ENCODE measurements at regions of chr15 and their contacts with region 1.

Region 1: DNA sequence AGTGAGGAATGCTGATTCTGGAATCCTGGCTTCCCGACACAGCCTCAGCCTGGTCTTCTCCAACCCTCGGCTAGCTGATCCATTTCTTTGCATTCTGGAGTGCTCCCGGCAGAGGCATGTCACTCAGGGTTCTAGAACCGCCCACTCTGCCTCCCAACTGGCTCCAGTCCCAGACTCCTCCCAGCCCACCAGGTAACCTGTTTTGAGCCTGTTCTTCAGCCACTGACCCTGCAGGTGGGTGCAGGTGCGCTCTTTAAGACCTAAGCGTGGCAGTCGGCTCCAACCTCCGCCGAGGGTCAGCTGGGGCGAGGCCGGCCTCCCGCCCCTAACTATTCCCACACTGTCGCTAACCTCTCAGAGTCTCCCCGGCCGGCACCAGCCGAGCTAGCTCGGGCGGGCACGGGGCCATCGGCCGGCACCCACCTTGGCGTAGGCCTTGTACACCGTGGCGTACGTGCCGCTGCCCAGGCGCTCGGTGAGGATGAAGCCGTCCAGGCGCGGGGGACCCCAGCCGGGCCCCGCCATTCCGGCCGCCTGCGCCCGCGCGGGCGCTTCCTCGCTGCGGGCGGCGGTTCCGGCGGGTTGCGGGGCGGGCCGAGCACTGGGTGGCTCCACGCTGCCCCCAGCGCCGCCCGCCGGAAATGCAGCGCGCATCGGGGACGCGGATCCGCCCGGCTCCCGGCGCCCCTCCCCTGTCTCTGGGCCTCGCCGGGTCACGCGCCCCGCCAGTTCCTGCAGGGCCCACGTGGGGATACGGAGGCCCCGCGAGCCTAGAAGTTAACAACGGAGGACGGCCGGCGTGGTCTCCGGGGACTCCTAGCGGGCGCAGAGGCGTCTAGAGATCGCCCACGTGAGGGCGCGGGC is at the start of gene ULK3:
- DNase-seq: no peak
- ATAC-seq: peak; percentile 95
- H3K4me3 ChIP-seq: peak within 1 kb of the TSS; percentile 86
- H3K27ac ChIP-seq: peak within 1 kb of the TSS; percentile 80
- H3K4me1 ChIP-seq: peaks cover 13% of the 10 kb centered on the region
- H3K27me3 ChIP-seq: no peaks in the 10 kb centered on the region
- CTCF ChIP-seq: peak; percentile 45 to 60 (median 50); a peak in 5 of 6 replicates
- EP300 ChIP-seq: no peak
- POLR2A ChIP-seq: peak; percentile 75
- RAD21 ChIP-seq: peak; percentile 26
- polyA plus RNA-seq, gene ULK3: 0.64 to 1.4 TPM

Region 2: GRCh38 chr15:74793135-74794028 is 49.4 kb before region 1 on chr15:
- CTCF ChIA-PET with region 1: interaction called, 10 read pairs
- POLR2A ChIA-PET with region 1: no interaction called
- RAD21 ChIA-PET with region 1: interaction called, 4 read pairs
- SMC1A ChIA-PET with region 1: no interaction called
- in situ Hi-C with region 1: no loop called
- intact Hi-C with region 1: no loop called
- DNase-seq: no peak
- ATAC-seq: peak; percentile 23
- H3K4me3 ChIP-seq: peak overlapping the region; percentile 77
- H3K27ac ChIP-seq: peak overlapping the region; percentile 96
- H3K4me1 ChIP-seq: peaks cover 64% of the 10 kb centered on the region
- H3K27me3 ChIP-seq: no peaks in the 10 kb centered on the region
- CTCF ChIP-seq: peak; percentile 63 to 68 (median 64)
- EP300 ChIP-seq: no peak
- POLR2A ChIP-seq: peak; percentile 33
- RAD21 ChIP-seq: peak; percentile 64

Region 3: DNA sequence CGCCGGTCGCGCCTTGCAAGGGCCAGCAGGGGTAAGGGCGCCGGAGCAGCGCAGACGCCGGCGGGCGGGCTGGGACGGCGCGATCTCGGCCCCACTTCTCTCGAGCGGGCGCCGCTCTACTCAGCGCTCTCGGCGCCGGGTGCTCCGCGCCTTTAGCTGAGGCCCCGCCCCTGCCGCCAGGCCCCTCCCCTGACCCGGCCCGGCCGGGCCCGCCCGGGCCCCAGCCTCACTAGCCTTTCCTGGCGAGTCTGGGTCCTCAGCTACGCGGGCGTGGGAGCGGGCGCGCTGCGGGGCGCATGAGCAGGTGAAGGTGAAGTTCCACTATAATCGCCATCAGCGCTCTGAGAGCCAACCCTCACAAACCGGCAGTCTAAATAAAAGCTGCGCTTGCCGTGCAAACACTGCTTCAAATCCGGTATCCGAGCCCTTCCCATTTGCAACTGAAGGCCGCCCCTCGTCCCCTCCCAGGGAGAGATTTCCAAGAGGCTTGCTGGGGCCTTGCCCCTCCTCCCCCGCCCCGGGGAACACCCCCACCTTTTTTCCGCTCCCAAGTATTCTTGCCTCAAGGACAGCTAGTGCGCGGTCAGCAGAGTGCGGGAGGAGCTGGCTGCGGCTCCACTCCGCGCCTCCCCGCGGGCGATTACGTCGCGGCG is 114.0 kb after region 1 on chr15 and contains the start of gene RPP25:
- CTCF ChIA-PET with region 1: no interaction called
- POLR2A ChIA-PET with region 1: no interaction called
- RAD21 ChIA-PET with region 1: no interaction called
- SMC1A ChIA-PET with region 1: no interaction called
- in situ Hi-C with region 1: no loop called
- intact Hi-C with region 1: no loop called
- DNase-seq: no peak
- ATAC-seq: peak; percentile 94
- H3K4me3 ChIP-seq: peak within 1 kb of the TSS; percentile 65
- H3K27ac ChIP-seq: no peak within 1 kb of the TSS
- H3K4me1 ChIP-seq: peaks cover 30% of the 10 kb centered on the region
- H3K27me3 ChIP-seq: peaks cover 8 to 17% of the 10 kb centered on the region in 2 experiments
- CTCF ChIP-seq: no peak
- EP300 ChIP-seq: no peak
- POLR2A ChIP-seq: peak; percentile 76
- RAD21 ChIP-seq: no peak
- polyA plus RNA-seq, gene RPP25: 0.63 to 1.8 TPM

Measured in GM12878 (cell line).